Right ventricle myocardium superior (tissue), 1 donor: ENCODE measurements at regions of chr3 and their contacts with region 1.

Region 1: DNA sequence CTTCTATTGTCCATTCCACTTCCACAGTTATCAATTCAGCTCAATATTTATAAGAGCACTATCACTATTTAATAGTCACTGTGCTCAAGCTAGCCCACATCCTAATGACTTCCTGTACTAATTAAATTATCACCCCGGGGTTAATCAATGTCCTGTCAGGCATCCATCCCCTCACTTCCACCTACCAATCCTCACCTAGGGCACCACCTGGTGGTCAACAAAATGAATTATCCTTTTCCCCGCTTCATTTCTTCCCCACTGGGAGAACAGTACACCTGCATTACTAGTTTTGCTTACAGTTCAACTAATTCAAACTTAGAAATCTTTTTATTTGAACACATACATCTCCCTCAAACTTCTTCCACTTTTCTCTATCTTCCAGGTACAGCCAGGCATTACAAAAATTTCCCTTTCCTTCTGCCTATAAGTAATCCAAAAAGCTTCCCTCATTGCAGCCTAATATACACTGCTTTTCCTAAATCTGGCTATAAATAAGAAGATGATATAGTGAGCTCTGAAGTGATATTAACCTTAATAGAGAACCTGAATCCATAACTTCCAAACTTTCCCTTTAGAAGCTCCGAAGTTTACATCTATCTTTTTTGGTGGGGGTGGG is 68.5 kb downstream of the TMCC1 start:
- DNase-seq: no peak
- ATAC-seq: peak; percentile 47

Region 2: DNA sequence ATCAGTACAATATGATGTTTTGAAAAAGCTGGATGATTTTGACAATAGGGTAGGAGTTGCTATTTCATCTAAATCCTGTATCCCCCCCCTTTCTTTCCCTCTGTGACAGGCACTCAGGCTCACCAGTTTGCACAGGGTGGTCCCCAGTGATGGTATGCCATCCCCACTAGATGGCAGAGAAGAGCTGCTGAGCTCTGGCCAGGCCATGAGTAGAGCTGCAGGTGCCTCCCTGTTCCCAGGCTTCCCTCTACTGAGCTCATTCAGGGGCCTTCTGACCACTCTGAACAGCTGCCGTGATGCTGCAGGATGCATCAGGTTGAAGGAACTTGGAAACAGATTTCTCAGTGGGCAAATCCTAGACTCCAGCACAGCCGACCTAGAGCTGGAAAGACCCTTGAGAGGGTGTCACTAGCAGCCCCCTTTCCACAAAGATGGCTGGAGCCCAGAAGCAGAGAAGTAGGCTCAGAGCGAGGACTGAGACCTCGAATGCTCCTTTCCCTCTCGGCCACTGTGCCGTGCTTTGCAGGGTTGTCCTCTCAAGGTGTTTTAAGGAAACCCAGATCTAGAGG is 441.7 kb before region 1 on chr3:
- intact Hi-C with region 1: loop called (anchors 10 kb)
- DNase-seq: peak; percentile 49
- ATAC-seq: peak; percentile 88

Region 3: GRCh38 chr3:129490242-129491045 is 334.6 kb before region 1 on chr3:
- intact Hi-C with region 1: loop called (anchors 5 kb)
- DNase-seq: peak; percentile 88
- ATAC-seq: peak; percentile 94

Region 4: DNA sequence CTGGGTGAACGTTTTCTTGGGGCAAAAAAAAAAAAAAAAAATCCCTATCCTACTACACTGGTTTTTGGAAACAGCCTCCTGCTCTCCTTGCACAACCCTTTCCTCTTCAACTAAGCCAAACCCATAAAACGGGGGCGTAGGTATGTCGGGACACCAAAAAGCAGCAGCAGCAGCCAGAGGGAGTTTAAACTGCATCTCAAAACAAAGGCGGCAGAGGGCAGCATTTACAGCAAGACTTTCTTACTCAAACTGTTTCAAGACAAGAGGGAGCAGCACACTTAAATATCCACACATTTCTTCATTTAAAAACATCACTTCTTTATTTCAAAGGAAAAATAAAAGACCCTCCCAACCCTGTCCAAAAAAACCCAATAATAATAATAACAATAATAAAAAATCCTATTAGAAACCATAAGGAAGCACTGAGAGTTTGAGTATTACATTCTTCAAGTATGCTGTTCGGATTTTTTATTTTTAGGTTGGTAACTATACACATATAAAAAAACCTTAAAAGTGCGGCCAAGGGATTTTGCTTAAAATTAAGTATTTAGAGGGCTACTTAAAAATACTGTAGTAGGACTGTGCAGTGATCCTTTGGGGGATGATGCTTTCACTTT is 174.7 kb before region 1 on chr3:
- intact Hi-C with region 1: loop called (anchors 2 kb)
- DNase-seq: no peak
- ATAC-seq: peak; percentile 83

Region 5: GRCh38 chr3:129934234-129935123 is 109.4 kb after region 1 on chr3:
- intact Hi-C with region 1: loop called (anchors 5 kb)
- DNase-seq: peak; percentile 53
- ATAC-seq: peak; percentile 67

Region 6: DNA sequence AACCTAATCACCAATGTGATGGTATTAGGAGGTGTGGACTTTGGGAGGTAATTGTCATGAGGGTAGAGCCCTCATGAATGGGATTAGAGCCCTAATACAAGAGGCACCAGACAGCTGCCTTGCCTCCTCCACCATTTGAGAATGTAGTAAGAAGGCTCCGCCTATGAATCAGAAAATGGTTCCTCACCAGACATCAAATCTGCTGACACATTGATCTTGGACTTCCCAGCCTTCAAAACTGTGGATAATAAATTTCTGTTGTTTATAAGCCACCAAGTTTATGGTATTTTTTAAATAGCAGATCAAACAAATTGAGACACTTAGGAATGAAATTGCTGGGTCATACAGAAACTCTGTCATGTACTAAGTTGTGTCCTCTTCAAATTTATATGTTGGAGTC is 463.6 kb after region 1 on chr3:
- intact Hi-C with region 1: no loop called
- DNase-seq: no peak
- ATAC-seq: no peak